ENCODE measurements at regions of chr19 and their contacts with region 1.

Region 1: GRCh38 chr19:48321622-48322591 is 3.4 kb upstream of the EMP3 start:
- DNase-seq: peak; percentile 99
- H3K4me3 ChIP-seq: peak overlapping the region; percentile 57 to 76 (median 63)
- H3K27ac ChIP-seq: peak overlapping the region; percentile 96
- H3K4me1 ChIP-seq: peaks cover 30% of the 10 kb centered on the region
- H3K27me3 ChIP-seq: no peaks in the 10 kb centered on the region
- CTCF ChIP-seq: peak in 1 of 2 donors; percentile 29

Region 2: GRCh38 chr19:48111280-48111679 is 210.6 kb before region 1 on chr19:
- CTCF ChIA-PET with region 1: no interaction called
- dilution Hi-C with region 1: no loop called
- in situ Hi-C with region 1: no loop called
- intact Hi-C with region 1: no loop called
- DNase-seq: no peak
- H3K4me3 ChIP-seq: no peak overlapping the region
- H3K27ac ChIP-seq: no peak overlapping the region
- H3K4me1 ChIP-seq: peaks cover 11% of the 10 kb centered on the region
- H3K27me3 ChIP-seq: no peaks in the 10 kb centered on the region
- CTCF ChIP-seq: no peak

Region 3: DNA sequence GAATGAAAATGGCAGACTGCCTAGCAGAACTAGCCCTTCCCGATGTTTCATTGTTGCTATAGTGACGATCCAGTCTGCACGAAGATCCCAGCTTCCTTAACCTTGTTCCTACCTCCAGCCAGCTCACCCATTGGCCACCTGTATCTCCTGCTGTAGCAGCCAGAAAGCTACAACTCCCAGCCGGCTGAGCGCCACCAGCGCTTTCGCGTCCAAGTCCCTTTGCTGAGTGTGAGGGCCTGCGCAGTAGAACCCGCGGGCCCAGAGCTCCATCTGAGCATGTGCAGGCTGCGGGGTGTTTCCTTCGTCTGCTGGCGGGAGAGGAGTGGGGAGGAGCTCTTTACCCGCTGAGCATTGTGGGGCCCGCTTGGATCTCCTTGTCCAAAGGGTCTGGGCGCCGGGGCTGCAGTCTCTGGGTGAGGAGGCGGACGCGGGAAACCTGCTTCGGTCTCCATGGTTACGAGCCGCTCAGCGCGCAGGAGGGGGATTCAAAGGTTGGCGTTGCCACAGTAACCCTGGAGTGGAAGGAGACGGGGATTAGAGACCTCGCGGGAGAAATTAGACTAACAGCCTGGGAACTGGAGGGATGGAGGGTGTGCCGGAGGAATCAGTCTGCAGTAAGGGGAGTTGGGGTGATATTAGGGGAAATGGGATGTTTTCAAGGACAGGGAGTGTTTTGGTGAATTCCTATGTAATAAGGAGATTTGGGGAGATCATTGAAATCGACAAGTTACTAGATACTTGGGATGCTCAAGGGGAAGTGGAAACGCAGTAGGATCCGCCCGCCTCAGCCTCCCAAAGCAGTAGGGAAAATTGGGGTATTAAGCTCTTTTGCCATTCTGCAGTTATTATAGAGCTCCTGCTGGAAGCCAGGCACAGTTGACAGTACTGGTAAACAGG is 117.9 kb before region 1 on chr19:
- CTCF ChIA-PET with region 1: no interaction called
- dilution Hi-C with region 1: no loop called
- in situ Hi-C with region 1: no loop called
- intact Hi-C with region 1: no loop called
- DNase-seq: peak; percentile 98
- H3K4me3 ChIP-seq: peak overlapping the region; percentile 55 to 76 (median 73)
- H3K27ac ChIP-seq: peak overlapping the region; percentile 86
- H3K4me1 ChIP-seq: peaks cover 14% of the 10 kb centered on the region
- H3K27me3 ChIP-seq: no peaks in the 10 kb centered on the region
- CTCF ChIP-seq: no peak

Region 4: DNA sequence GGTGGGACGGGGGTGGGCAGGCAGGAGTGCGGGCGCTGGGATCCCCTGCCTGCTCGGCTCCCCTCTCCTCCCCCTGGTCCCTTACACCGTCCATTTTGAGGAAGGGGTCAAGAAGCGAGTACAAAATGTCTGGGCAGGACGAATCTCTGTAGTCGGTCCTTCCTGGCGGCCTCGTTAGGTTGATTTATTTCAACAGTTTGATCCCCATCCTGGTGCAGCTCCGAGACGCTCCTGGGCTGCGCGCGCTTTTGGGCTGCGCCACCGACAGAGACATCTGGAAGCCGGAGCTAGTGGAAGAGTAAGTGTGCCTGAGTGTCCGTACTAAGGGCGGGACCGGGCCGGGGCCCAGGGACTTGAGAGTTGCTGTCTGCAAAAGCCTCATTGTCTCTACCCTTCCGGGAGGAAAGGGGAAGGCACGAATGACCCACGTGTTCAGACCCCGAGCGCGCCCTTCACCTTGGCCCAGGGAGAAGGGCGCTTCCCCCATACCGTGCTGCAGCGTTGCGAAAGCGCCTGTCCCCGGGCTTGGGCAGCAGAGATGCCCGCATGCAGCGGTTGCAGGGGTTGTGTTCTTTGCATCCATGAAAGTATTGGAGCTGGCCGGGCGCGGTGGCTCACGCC is 50.3 kb before region 1 on chr19:
- CTCF ChIA-PET with region 1: no interaction called
- dilution Hi-C with region 1: no loop called
- in situ Hi-C with region 1: no loop called
- intact Hi-C with region 1: loop called (anchors 1 kb)
- DNase-seq: peak; percentile 47
- H3K4me3 ChIP-seq: peak overlapping the region; percentile 28 to 49 (median 45)
- H3K27ac ChIP-seq: peak overlapping the region; percentile 91
- H3K4me1 ChIP-seq: peaks cover 22% of the 10 kb centered on the region
- H3K27me3 ChIP-seq: no peaks in the 10 kb centered on the region
- CTCF ChIP-seq: no peak

Region 5: DNA sequence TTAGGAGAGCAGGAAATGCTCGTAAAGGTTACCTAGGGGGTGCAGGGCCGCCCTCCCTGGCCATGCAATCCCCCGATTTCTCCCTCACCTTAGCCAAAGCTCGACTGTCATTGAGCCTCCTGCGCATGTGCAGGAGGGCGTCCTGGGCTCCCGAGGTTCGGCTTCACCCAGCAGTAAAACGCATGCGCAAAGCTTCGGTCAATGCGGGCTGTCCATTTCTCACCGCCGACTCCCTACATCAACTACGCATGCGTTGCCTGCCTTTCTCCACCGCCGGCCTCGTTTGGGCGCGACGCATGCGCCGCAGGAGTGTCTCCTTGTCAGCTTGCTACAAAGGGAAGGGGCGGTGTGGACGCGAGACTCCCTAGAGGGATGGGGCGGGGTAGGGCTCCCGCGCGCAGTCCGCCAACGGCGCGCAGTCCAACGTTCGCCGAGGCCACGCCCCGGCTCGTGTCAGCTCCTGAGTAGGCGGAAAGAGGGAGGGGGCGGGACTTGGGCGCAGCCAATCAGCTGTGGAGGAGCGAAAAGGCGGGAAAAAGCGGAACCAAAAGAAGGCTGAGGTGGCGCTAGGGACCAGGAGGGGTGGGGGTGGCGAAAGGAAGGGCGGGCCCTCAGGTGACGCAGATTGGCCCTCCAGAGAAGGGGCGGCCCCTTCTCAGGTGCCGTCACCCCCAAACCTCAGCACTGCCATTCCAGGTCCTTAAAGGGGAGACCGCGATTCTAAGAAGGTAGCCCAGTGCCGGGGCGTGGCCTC is 42.1 kb after region 1 on chr19 and contains the starts of genes SYNGR4 and TMEM143:
- CTCF ChIA-PET with region 1: interaction called, 3 read pairs
- dilution Hi-C with region 1: no loop called
- in situ Hi-C with region 1: no loop called
- intact Hi-C with region 1: loop called (anchors 2 kb)
- DNase-seq: peak; percentile 99
- H3K4me3 ChIP-seq: peak within 1 kb of the TSS; percentile 41 to 58 (median 50)
- H3K27ac ChIP-seq: peak within 1 kb of the TSS; percentile 79
- H3K4me1 ChIP-seq: peaks cover 8% of the 10 kb centered on the region
- H3K27me3 ChIP-seq: no peaks in the 10 kb centered on the region
- CTCF ChIP-seq: no peak
- total RNA-seq, gene SYNGR4: not detected
- total RNA-seq, gene TMEM143: 4.5 to 9.0 TPM

Region 6: DNA sequence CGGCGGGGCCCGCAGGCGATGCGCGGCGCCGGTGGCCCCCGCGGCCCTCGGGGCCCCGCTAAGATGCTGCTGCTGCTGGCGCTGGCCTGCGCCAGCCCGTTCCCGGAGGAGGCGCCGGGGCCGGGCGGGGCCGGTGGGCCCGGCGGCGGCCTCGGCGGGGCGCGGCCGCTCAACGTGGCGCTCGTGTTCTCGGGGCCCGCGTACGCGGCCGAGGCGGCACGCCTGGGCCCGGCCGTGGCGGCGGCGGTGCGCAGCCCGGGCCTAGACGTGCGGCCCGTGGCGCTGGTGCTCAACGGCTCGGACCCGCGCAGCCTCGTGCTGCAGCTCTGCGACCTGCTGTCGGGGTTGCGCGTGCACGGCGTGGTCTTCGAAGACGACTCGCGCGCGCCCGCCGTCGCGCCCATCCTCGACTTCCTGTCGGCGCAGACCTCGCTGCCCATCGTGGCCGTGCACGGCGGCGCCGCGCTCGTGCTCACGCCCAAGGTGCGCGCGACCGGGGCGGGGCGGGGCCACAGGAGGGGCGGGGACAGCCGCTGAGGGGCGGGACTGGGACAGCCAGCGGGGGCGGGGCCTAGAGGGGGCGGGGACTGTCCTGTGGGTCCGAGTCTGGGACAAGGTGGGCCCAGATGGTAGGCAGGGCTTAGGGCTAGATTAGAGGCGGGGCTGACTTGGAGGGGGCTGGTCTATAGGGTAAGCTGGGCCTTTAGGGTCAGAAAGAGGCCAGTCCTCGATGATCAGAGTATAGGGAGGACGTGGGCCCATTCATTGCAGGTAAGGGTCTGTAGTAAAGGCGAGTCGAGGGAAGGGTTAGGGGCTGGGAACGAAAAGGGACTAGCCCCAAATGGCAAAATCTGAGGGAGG is 76.7 kb after region 1 on chr19:
- CTCF ChIA-PET with region 1: no interaction called
- dilution Hi-C with region 1: no loop called
- in situ Hi-C with region 1: no loop called
- intact Hi-C with region 1: loop called (anchors 2 kb)
- DNase-seq: peak; percentile 42
- H3K4me3 ChIP-seq: peak overlapping the region; percentile 17 to 56 (median 54)
- H3K27ac ChIP-seq: no peak overlapping the region
- H3K4me1 ChIP-seq: peaks cover 19% of the 10 kb centered on the region
- H3K27me3 ChIP-seq: peaks cover 10% of the 10 kb centered on the region
- CTCF ChIP-seq: no peak

Region 7: GRCh38 chr19:48492925-48493717 is 171.2 kb after region 1 on chr19:
- CTCF ChIA-PET with region 1: no interaction called
- dilution Hi-C with region 1: no loop called
- in situ Hi-C with region 1: no loop called
- intact Hi-C with region 1: loop called (anchors 2 kb)
- DNase-seq: peak; percentile 97
- H3K4me3 ChIP-seq: peak overlapping the region; percentile 46 to 86 (median 76)
- H3K27ac ChIP-seq: peak overlapping the region; percentile 47
- H3K4me1 ChIP-seq: peaks cover 23% of the 10 kb centered on the region
- H3K27me3 ChIP-seq: peaks cover 3% of the 10 kb centered on the region
- CTCF ChIP-seq: no peak

Measured in mammary epithelial cell (primary cell).